Calu3 (cell line): ENCODE measurements at regions of chr13 and their contacts with region 1.

Region 1: GRCh38 chr13:37769078-37769477 is 100.5 kb downstream of the TRPC4 start:
- DNase-seq: no peak
- H3K4me3 Mint-ChIP-seq: no peak overlapping the region
- H3K27ac Mint-ChIP-seq: no peak overlapping the region
- H3K4me1 Mint-ChIP-seq: no peaks in the 10 kb centered on the region
- H3K27me3 Mint-ChIP-seq: no peaks in the 10 kb centered on the region
- CTCF ChIP-seq: no peak

Region 2: GRCh38 chr13:37640499-37640898 is 128.6 kb before region 1 on chr13:
- CTCF ChIA-PET with region 1: interaction called, 3 read pairs
- intact Hi-C with region 1: loop called (anchors 10 kb)
- DNase-seq: peak; percentile 28
- H3K4me3 Mint-ChIP-seq: no peak overlapping the region
- H3K27ac Mint-ChIP-seq: no peak overlapping the region
- H3K4me1 Mint-ChIP-seq: no peaks in the 10 kb centered on the region
- H3K27me3 Mint-ChIP-seq: no peaks in the 10 kb centered on the region
- CTCF ChIP-seq: no peak